Body of pancreas (tissue), 4 donors: ENCODE measurements at regions of chr19 and their contacts with region 1.

Region 1: DNA sequence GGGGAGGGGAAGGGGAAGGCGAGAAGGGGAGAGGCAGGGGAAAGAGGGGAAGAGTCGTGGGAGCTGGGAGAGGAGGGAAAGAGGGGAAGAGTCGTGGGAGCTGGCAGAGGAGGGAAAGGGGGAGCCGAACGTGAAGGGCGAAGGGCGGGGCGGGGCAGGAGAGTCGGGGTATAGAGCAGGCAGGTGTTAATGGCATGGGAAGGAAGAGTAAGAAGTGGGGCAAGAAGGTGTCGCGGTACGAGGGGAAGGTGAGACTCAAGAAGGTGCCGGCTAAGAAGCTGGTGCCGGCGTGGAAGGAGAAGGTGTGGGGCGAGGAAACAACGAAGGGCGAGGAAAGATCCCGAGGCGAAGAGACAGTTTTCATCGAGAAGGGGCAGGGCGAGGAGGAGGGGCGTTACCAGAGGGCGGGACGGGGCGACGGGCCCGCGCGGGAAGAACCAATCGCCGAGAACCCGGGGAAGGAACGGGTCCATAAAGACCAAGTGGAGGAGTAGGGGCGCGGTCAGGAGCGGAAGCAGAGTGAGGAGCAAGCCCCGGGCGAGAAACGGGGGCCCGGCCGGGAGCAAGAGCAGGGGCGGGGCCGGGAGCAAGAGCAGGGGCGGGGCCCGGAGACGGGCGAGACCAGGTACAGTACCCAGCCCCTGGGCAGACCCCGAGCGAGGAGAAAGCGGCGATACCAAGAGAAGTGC is 463 bp downstream of the CATSPERG start:
- DNase-seq: peak; percentile 94 to 96 (median 96)
- ATAC-seq: peak; percentile 84
- H3K4me3 ChIP-seq: peak overlapping the region; percentile 51 to 66
- H3K27ac ChIP-seq: peak overlapping the region; percentile 89 to 93 (median 91)
- H3K4me1 ChIP-seq: peaks cover 11% of the 10 kb centered on the region
- H3K27me3 ChIP-seq: no peaks in the 10 kb centered on the region
- CTCF ChIP-seq: no peak
- POLR2A ChIP-seq: peak in 2 of 3 donors; percentile 62 to 71

Region 2: DNA sequence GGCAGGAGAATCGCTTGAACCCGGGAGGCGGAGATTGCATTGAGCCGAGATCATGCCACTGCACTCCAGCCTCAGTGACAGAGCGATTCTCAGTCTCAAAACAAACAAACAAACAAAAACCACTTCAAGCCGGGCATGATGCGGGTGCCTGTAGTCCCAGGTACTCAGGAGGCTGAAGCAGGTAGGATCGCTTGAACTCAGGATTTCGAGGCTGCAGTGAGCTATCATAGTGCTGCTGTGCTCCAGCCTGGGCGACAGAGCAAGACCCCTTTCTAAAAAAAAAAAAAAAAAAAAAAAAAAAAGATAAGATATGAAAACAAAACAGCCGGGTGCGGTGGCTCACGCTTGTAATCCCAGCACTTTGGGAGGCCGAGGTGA is 92.8 kb before region 1 on chr19:
- intact Hi-C with region 1: loop called (anchors 2 kb)
- DNase-seq: no peak
- ATAC-seq: no peak
- H3K4me3 ChIP-seq: no peak overlapping the region
- H3K27ac ChIP-seq: no peak overlapping the region
- H3K4me1 ChIP-seq: no peaks in the 10 kb centered on the region
- H3K27me3 ChIP-seq: no peaks in the 10 kb centered on the region
- CTCF ChIP-seq: no peak
- POLR2A ChIP-seq: no peak

Region 3: GRCh38 chr19:38374429-38375176 is 38.5 kb after region 1 on chr19 and contains the start of gene PSMD8:
- intact Hi-C with region 1: loop called (anchors 5 kb)
- DNase-seq: peak; percentile 99 to 100 (median 100)
- ATAC-seq: peak; percentile 99
- H3K4me3 ChIP-seq: peak within 1 kb of the TSS; percentile 55 to 75
- H3K27ac ChIP-seq: peak within 1 kb of the TSS; percentile 73 to 93 (median 80)
- H3K4me1 ChIP-seq: peaks cover 24% of the 10 kb centered on the region
- H3K27me3 ChIP-seq: no peaks in the 10 kb centered on the region
- CTCF ChIP-seq: peak in 4 of 7 experiments; percentile 9 to 36 (median 26)
- POLR2A ChIP-seq: peak; percentile 88 to 95 (median 95)
- total RNA-seq, gene PSMD8: 49.4 to 68.7 TPM